Calu3 (cell line): ENCODE measurements at regions of chr14 and their contacts with region 1.

Region 1: DNA sequence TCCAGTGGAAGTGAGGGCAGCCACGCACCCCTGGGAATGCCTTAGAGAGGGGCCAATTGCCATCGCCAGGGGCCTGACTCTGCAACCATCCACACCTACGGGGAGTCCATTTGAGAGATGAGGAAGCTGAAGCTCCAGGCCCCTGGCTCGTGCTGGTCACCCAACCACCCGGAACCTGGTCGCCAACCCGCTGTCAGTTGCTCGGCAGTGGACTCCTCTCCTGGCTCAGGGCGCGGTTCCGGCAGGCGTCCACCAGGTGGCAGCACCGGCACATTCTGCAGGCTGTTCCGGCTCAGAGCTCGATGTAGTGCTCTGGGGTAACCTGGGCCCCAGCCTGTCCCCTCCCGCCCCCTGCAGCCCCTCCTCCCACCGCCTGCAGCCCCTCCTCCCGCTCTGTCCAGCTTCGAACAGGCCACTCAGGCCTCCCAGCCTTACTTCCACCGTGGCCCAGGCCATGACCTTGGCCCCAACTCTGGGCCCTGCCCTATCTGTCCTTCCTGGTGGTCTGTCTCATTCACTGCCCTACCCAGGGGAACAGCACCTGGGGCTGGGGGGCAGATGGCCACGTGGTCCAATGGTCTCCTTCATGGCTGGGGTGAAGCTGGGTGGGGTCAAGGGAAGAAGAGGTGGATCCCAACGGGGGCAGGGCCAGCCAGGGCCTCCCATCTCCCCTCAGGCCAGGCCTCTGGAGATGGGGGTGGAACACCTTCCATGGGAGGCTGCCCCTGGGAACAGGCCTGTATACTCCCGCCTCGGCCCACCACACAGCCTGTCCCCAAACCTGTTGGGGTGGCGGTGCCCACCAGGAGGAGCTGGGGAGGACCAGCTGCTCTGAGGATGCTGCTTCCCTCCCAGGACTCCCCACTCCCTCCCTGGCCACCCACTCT is 15.7 kb downstream of the SIVA1 start:
- DNase-seq: peak; percentile 95
- H3K4me3 Mint-ChIP-seq: no peak overlapping the region
- H3K27ac Mint-ChIP-seq: no peak overlapping the region
- H3K4me1 Mint-ChIP-seq: no peaks in the 10 kb centered on the region
- H3K27me3 Mint-ChIP-seq: no peaks in the 10 kb centered on the region
- CTCF ChIP-seq: peak; percentile 91

Region 2: DNA sequence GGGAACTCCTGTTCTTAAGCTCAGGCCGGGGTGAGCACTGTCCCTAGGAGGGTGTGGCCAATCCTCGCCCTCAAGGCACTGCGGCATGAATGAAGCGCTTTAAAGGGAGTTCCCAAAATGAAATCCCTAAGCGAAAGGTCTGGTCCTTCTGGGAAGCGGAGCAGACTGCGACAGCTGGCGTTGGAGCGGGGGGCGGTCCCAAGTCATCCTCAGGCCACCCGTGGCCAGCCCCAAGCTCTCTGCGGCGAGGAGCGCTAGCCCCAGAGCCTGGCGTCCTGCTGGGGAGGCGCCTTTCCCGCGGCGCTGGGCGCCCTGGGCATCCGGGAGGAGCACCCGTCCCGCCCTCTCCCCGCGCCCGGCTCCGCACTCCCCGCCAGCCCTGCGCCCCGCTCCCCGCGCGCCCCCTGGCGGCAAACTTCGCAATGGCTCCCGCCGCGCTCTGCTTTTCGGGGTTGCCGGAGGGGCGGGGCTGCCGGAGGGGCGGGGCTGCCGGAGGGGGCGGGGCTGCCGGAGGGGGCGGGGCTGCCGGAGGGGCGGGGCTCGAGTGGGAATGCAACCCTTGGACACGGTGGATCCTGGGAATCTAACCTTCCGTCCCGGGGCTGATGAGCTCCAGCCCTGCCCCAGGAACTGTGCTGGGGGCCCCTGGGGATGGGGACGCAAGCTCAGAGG is 57.6 kb after region 1 on chr14:
- CTCF ChIA-PET with region 1: interaction called, 13 read pairs
- intact Hi-C with region 1: loop called (anchors 1 kb)
- DNase-seq: peak; percentile 96
- H3K4me3 Mint-ChIP-seq: peak overlapping the region; percentile 76
- H3K27ac Mint-ChIP-seq: no peak overlapping the region
- H3K4me1 Mint-ChIP-seq: peaks cover 9% of the 10 kb centered on the region
- H3K27me3 Mint-ChIP-seq: peaks cover 27% of the 10 kb centered on the region
- CTCF ChIP-seq: peak; percentile 56

Region 3: GRCh38 chr14:104932676-104933631 is 164.3 kb after region 1 on chr14:
- CTCF ChIA-PET with region 1: no interaction called
- intact Hi-C with region 1: no loop called
- DNase-seq: peak; percentile 91
- H3K4me3 Mint-ChIP-seq: peak overlapping the region; percentile 72
- H3K27ac Mint-ChIP-seq: no peak overlapping the region
- H3K4me1 Mint-ChIP-seq: no peaks in the 10 kb centered on the region
- H3K27me3 Mint-ChIP-seq: no peaks in the 10 kb centered on the region
- CTCF ChIP-seq: peak; percentile 61